Caco-2 (cell line): ENCODE measurements at regions of chr20 and their contacts with region 1.

Region 1: DNA sequence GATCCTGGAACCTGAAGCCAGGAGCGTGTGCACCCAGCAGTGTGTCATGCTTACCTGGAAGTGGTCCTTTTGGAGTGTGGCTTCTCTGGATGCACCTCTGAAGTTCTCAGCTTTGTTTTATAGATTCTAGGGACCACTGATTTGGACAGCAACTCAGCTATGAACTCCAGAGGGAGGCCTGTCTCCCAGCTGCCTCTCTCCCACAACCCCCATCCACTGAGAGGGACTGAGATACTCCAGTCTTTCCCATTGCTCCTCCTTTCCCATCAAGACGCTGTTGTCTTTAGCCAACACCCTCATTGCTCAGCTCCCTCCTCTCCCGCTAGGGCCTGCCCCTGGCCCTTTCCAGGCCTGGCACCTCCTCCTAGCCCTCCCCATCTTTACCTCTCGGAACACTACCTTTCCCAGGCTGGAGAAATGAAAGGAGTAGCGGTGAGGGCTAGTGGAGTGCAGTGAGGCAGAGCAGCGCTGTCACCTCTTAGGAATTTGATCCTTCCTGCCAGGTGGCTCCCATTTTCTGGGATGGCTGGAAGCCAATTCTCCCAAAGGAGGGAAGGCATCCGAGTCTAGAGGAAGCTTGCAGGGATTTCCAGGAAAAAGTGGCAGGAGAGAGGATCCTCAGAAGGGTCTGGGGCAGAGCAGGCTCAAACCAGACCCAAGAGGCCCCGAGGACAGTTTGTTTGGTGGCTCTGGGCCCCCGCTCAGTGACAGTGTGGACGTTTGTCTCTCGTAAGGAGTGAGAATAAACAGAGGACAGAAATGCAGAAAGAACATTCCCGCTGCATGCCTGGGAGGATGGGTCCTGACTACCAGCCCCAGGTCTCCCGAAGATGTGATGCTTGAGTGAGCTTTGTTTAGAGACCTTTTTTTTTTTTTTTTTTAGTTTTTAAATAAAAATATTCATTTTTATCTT is at the start of gene LRRN4:
- DNase-seq: peak; percentile 41 to 74
- H3K4me3 ChIP-seq: peak within 1 kb of the TSS; percentile 71
- H3K4me3 Mint-ChIP-seq: peak within 1 kb of the TSS; percentile 77
- H3K27ac Mint-ChIP-seq: peak within 1 kb of the TSS; percentile 64
- H3K4me1 ChIP-seq: peaks cover 70% of the 10 kb centered on the region
- H3K4me1 Mint-ChIP-seq: peaks cover 49% of the 10 kb centered on the region
- H3K27me3 ChIP-seq: no peaks in the 10 kb centered on the region
- H3K27me3 Mint-ChIP-seq: no peaks in the 10 kb centered on the region
- CTCF ChIP-seq: no peak
- total RNA-seq, gene LRRN4: 17.9 and 19.6 TPM in 2 replicates

Region 2: GRCh38 chr20:5687884-5688283 is 366.1 kb before region 1 on chr20:
- CTCF ChIA-PET with region 1: no interaction called
- POLR2A ChIA-PET with region 1: interaction called, 16 read pairs
- intact Hi-C with region 1: no loop called
- DNase-seq: no peak
- H3K4me3 ChIP-seq: no peak overlapping the region
- H3K4me3 Mint-ChIP-seq: no peak overlapping the region
- H3K27ac Mint-ChIP-seq: no peak overlapping the region
- H3K4me1 ChIP-seq: no peaks in the 10 kb centered on the region
- H3K4me1 Mint-ChIP-seq: no peaks in the 10 kb centered on the region
- H3K27me3 ChIP-seq: no peaks in the 10 kb centered on the region; the same call in 1 of the 2 replicates
- H3K27me3 Mint-ChIP-seq: no peaks in the 10 kb centered on the region
- CTCF ChIP-seq: no peak

Region 3: GRCh38 chr20:5918856-5919625 is 135.0 kb before region 1 on chr20:
- CTCF ChIA-PET with region 1: interaction called, 11 read pairs
- POLR2A ChIA-PET with region 1: no interaction called
- intact Hi-C with region 1: no loop called
- DNase-seq: no peak
- H3K4me3 ChIP-seq: no peak overlapping the region
- H3K4me3 Mint-ChIP-seq: no peak overlapping the region
- H3K27ac Mint-ChIP-seq: no peak overlapping the region
- H3K4me1 ChIP-seq: 0 out of 2 replicates have a peak, but pooled peaks cover 4% of the 10 kb centered on the region
- H3K4me1 Mint-ChIP-seq: no peaks in the 10 kb centered on the region
- H3K27me3 ChIP-seq: no peaks in the 10 kb centered on the region
- H3K27me3 Mint-ChIP-seq: peaks cover 17% of the 10 kb centered on the region
- CTCF ChIP-seq: no peak

Region 4: DNA sequence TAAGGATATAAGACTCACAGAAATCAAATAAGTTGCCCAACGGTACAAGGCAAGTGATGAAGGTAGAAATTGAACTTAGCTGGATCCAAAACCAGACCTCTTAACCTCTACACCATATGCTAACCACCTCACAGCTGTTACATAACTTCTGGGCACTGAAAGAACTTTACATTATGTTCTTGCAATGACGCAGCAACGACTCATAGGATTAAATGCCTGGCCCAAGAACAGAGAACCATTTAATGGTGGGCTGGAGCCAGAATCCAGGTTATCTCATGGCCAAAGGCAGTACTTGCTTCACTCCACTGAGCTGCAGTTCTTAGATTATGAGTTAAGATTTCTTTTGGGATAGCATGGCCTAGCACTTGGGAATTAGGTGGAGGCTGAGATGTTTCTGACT is 108.1 kb before region 1 on chr20:
- CTCF ChIA-PET with region 1: no interaction called
- POLR2A ChIA-PET with region 1: no interaction called
- intact Hi-C with region 1: no loop called
- DNase-seq: no peak
- H3K4me3 ChIP-seq: no peak overlapping the region
- H3K4me3 Mint-ChIP-seq: no peak overlapping the region
- H3K27ac Mint-ChIP-seq: no peak overlapping the region
- H3K4me1 ChIP-seq: peaks cover 8% of the 10 kb centered on the region
- H3K4me1 Mint-ChIP-seq: no peaks in the 10 kb centered on the region
- H3K27me3 ChIP-seq: no peaks in the 10 kb centered on the region
- H3K27me3 Mint-ChIP-seq: no peaks in the 10 kb centered on the region
- CTCF ChIP-seq: no peak